CD4-positive, alpha-beta T cell (primary cell): ENCODE measurements at regions of chr3 and their contacts with region 1.

Region 1: DNA sequence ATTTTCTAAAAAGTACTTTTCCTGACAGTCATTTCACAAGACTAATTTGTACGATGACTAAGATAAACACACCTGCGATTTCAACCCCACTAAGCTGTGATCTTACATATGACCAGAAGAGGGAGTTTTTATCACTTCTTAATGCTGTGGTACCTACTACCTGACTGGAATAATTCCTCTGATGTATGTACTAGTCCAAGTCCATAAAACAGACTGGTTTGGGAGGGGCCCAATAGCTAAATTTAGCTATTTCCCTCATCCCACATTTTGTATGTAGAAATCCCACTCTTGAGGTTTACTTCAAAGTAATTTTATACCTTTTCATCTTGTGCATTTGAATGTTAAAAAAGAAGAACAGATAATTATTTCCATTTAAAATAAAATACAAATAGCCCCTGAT is 49.7 kb upstream of the SCAANT1 start:
- DNase-seq: peak in 4 of 14 experiments; percentile 26 to 78 (median 77)
- ATAC-seq: peak; percentile 99
- H3K4me3 ChIP-seq: no peak overlapping the region
- H3K4me3 Mint-ChIP-seq: no peak overlapping the region
- H3K27ac ChIP-seq: no peak overlapping the region
- H3K27ac Mint-ChIP-seq: peak overlapping the region; percentile 63
- H3K4me1 ChIP-seq: peaks cover 14% of the 10 kb centered on the region
- H3K4me1 Mint-ChIP-seq: peaks cover 47% of the 10 kb centered on the region
- H3K27me3 ChIP-seq: no peaks in the 10 kb centered on the region
- H3K27me3 Mint-ChIP-seq: no peaks in the 10 kb centered on the region
- CTCF ChIP-seq: peak; percentile 93

Region 2: GRCh38 chr3:63951492-63952247 is 10.2 kb before region 1 on chr3:
- CTCF ChIA-PET with region 1: interaction called, 10 read pairs
- POLR2A ChIA-PET with region 1: interaction called, 7 read pairs
- intact Hi-C with region 1: no loop called
- DNase-seq: peak in 1 of 14 experiments; percentile 51
- ATAC-seq: no peak
- H3K4me3 ChIP-seq: peak overlapping the region; percentile 9
- H3K4me3 Mint-ChIP-seq: peak overlapping the region; percentile 14
- H3K27ac ChIP-seq: peak overlapping the region in 1 of 2 donors; percentile 8
- H3K27ac Mint-ChIP-seq: peak overlapping the region; percentile 66
- H3K4me1 ChIP-seq: peaks cover 21% of the 10 kb centered on the region
- H3K4me1 Mint-ChIP-seq: peaks cover 53% of the 10 kb centered on the region
- H3K27me3 ChIP-seq: no peaks in the 10 kb centered on the region
- H3K27me3 Mint-ChIP-seq: no peaks in the 10 kb centered on the region
- CTCF ChIP-seq: no peak

Region 3: GRCh38 chr3:63975723-63976122 is 13.8 kb after region 1 on chr3:
- CTCF ChIA-PET with region 1: interaction called, 168 read pairs
- POLR2A ChIA-PET with region 1: interaction called, 270 read pairs
- intact Hi-C with region 1: loop called (anchors 2 kb)
- DNase-seq: no peak
- ATAC-seq: no peak
- H3K4me3 ChIP-seq: no peak overlapping the region
- H3K4me3 Mint-ChIP-seq: peak overlapping the region; percentile 54
- H3K27ac ChIP-seq: no peak overlapping the region
- H3K27ac Mint-ChIP-seq: peak overlapping the region; percentile 94
- H3K4me1 ChIP-seq: peaks cover 69% of the 10 kb centered on the region
- H3K4me1 Mint-ChIP-seq: peaks cover 97% of the 10 kb centered on the region
- H3K27me3 ChIP-seq: no peaks in the 10 kb centered on the region
- H3K27me3 Mint-ChIP-seq: no peaks in the 10 kb centered on the region
- CTCF ChIP-seq: no peak

Region 4: GRCh38 chr3:63993653-63994079 is 31.8 kb after region 1 on chr3:
- CTCF ChIA-PET with region 1: interaction called, 40 read pairs
- POLR2A ChIA-PET with region 1: interaction called, 24 read pairs
- intact Hi-C with region 1: loop called (anchors 1 kb)
- DNase-seq: peak; percentile 33 to 81 (median 48)
- ATAC-seq: peak; percentile 87
- H3K4me3 ChIP-seq: no peak overlapping the region
- H3K4me3 Mint-ChIP-seq: peak overlapping the region; percentile 11
- H3K27ac ChIP-seq: no peak overlapping the region
- H3K27ac Mint-ChIP-seq: peak overlapping the region; percentile 83
- H3K4me1 ChIP-seq: peaks cover 14% of the 10 kb centered on the region
- H3K4me1 Mint-ChIP-seq: peaks cover 74% of the 10 kb centered on the region
- H3K27me3 ChIP-seq: no peaks in the 10 kb centered on the region
- H3K27me3 Mint-ChIP-seq: no peaks in the 10 kb centered on the region
- CTCF ChIP-seq: peak; percentile 95